ENCODE measurements at regions of chr9 and their contacts with region 1.

Region 1: GRCh38 chr9:126781186-126782052 is 23.4 kb upstream of the ZBTB43 start:
- DNase-seq: peak; percentile 83
- ATAC-seq: peak; percentile 86
- H3K4me3 ChIP-seq: no peak overlapping the region
- H3K4me3 Mint-ChIP-seq: no peak overlapping the region
- H3K27ac ChIP-seq: no peak overlapping the region
- H3K27ac Mint-ChIP-seq: no peak overlapping the region
- H3K4me1 ChIP-seq: peaks cover 0 to 3% of the 10 kb centered on the region in 2 donors
- H3K4me1 Mint-ChIP-seq: no peaks in the 10 kb centered on the region
- H3K27me3 ChIP-seq: peaks cover 0 to 8% (median 4%) of the 10 kb centered on the region in 4 experiments
- H3K27me3 Mint-ChIP-seq: peaks cover 24% of the 10 kb centered on the region
- CTCF ChIP-seq: peak; percentile 98

Region 2: GRCh38 chr9:126611592-126612325 is 169.7 kb before region 1 on chr9:
- CTCF ChIA-PET with region 1: interaction called, 5 read pairs
- POLR2A ChIA-PET with region 1: interaction called, 3 read pairs
- intact Hi-C with region 1: loop called (anchors 2 kb)
- DNase-seq: peak; percentile 82
- ATAC-seq: peak; percentile 80
- H3K4me3 ChIP-seq: peak overlapping the region in 3 of 5 experiments; percentile 12 to 52 (median 16)
- H3K4me3 Mint-ChIP-seq: peak overlapping the region; percentile 76
- H3K27ac ChIP-seq: no peak overlapping the region
- H3K27ac Mint-ChIP-seq: peak overlapping the region; percentile 0
- H3K4me1 ChIP-seq: peaks cover 35 to 48% of the 10 kb centered on the region in 2 donors
- H3K4me1 Mint-ChIP-seq: peaks cover 31% of the 10 kb centered on the region
- H3K27me3 ChIP-seq: peaks cover 0 to 77% (median 45%) of the 10 kb centered on the region in 4 experiments
- H3K27me3 Mint-ChIP-seq: peaks cover 58% of the 10 kb centered on the region
- CTCF ChIP-seq: peak; percentile 89

Region 3: DNA sequence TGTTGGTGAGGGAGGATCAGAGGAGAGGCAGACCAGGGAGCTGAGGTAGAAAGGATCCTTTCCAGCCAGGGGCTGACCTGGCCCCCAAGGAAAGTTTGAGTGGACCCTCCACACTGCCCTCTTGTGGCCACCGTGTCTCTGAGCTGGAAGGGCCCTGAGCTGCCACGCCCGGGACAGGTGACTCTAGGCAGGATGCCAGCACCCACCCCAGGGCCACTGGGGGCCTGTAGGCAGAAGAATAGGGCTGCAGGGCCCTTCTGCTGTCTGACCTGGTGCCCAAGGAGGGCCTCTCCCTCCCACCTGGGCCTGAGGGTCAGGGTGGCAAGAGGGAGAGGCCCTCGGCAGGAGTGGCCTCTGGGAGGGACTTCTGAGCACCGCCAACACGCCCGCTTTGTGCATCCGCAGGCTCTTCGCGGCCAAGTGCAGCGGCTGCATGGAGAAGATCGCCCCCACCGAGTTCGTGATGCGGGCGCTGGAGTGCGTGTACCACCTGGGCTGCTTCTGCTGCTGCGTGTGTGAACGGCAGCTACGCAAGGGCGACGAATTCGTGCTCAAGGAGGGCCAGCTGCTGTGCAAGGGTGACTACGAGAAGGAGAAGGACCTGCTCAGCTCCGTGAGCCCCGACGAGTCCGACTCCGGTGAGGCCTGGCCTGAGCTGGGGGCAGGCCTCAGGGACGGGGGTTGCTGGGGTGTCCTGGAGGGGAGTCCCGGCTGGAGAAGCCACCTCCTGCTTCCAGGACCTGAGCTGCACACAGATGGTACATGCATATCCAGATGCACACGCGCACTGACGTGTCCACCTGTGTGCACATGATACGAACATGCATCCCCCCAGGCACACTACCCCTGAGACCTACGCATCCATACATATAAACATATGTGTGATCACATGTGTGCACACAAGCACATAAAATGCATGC is 90.7 kb before region 1 on chr9:
- CTCF ChIA-PET with region 1: interaction called, 12 read pairs
- POLR2A ChIA-PET with region 1: no interaction called
- intact Hi-C with region 1: no loop called
- DNase-seq: peak; percentile 61
- ATAC-seq: peak; percentile 60
- H3K4me3 ChIP-seq: no peak overlapping the region
- H3K4me3 Mint-ChIP-seq: no peak overlapping the region
- H3K27ac ChIP-seq: no peak overlapping the region
- H3K27ac Mint-ChIP-seq: no peak overlapping the region
- H3K4me1 ChIP-seq: no peaks in the 10 kb centered on the region
- H3K4me1 Mint-ChIP-seq: no peaks in the 10 kb centered on the region
- H3K27me3 ChIP-seq: peaks cover 0 to 44% (median 2%) of the 10 kb centered on the region in 4 experiments
- H3K27me3 Mint-ChIP-seq: peaks cover 29% of the 10 kb centered on the region
- CTCF ChIP-seq: peak; percentile 73

Region 4: GRCh38 chr9:126722252-126723078 is 59.0 kb before region 1 on chr9:
- CTCF ChIA-PET with region 1: interaction called, 16 read pairs
- POLR2A ChIA-PET with region 1: interaction called, 3 read pairs
- intact Hi-C with region 1: no loop called
- DNase-seq: peak; percentile 94
- ATAC-seq: peak; percentile 80
- H3K4me3 ChIP-seq: peak overlapping the region; percentile 41 to 95 (median 83)
- H3K4me3 Mint-ChIP-seq: peak overlapping the region; percentile 95
- H3K27ac ChIP-seq: peak overlapping the region; percentile 97 to 98
- H3K27ac Mint-ChIP-seq: peak overlapping the region; percentile 98
- H3K4me1 ChIP-seq: peaks cover 38 to 46% of the 10 kb centered on the region in 2 donors
- H3K4me1 Mint-ChIP-seq: peaks cover 47% of the 10 kb centered on the region
- H3K27me3 ChIP-seq: no peaks in the 10 kb centered on the region
- H3K27me3 Mint-ChIP-seq: no peaks in the 10 kb centered on the region
- CTCF ChIP-seq: no peak

Region 5: GRCh38 chr9:126791406-126792151 is 10.2 kb after region 1 on chr9:
- CTCF ChIA-PET with region 1: interaction called, 11 read pairs
- POLR2A ChIA-PET with region 1: no interaction called
- intact Hi-C with region 1: no loop called
- DNase-seq: no peak
- ATAC-seq: no peak
- H3K4me3 ChIP-seq: no peak overlapping the region
- H3K4me3 Mint-ChIP-seq: no peak overlapping the region
- H3K27ac ChIP-seq: no peak overlapping the region
- H3K27ac Mint-ChIP-seq: no peak overlapping the region
- H3K4me1 ChIP-seq: no peaks in the 10 kb centered on the region
- H3K4me1 Mint-ChIP-seq: no peaks in the 10 kb centered on the region
- H3K27me3 ChIP-seq: peaks cover 0 to 13% (median 4%) of the 10 kb centered on the region in 4 experiments
- H3K27me3 Mint-ChIP-seq: peaks cover 58% of the 10 kb centered on the region
- CTCF ChIP-seq: no peak

Measured in B cell (primary cell).